Endothelial cell of umbilical vein (primary cell): ENCODE measurements at regions of chr6 and their contacts with region 1.

Region 1: DNA sequence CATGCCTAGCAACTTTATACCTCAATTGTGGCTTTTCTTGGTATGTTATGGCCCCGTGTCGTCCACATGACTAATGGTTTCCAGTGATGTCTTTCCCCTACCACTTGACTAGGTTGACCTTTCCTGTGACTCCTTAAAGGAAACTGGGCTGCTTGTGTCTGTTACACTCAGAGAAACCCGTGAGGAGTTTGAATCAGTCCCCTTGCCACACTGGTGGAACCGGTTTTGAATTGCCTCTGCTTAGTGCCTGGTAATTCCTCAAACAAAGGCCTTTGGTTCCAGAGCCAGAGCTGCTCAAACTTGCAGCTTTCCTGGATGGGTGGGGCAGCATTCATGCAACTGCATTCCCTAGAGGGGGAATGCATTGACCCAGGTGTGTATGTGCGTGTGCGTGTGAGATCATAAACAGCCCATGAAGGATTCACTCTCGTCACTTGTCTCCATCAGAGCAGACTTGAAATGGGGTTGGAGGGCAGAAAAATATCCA is 22.0 kb downstream of the ECT2L start:
- DNase-seq: peak; percentile 56
- H3K4me3 ChIP-seq: no peak overlapping the region
- H3K27ac ChIP-seq: no peak overlapping the region
- H3K4me1 ChIP-seq: peaks cover 23% of the 10 kb centered on the region
- H3K27me3 ChIP-seq: no peaks in the 10 kb centered on the region
- CTCF ChIP-seq: no peak
- POLR2A ChIP-seq: no peak

Region 2: DNA sequence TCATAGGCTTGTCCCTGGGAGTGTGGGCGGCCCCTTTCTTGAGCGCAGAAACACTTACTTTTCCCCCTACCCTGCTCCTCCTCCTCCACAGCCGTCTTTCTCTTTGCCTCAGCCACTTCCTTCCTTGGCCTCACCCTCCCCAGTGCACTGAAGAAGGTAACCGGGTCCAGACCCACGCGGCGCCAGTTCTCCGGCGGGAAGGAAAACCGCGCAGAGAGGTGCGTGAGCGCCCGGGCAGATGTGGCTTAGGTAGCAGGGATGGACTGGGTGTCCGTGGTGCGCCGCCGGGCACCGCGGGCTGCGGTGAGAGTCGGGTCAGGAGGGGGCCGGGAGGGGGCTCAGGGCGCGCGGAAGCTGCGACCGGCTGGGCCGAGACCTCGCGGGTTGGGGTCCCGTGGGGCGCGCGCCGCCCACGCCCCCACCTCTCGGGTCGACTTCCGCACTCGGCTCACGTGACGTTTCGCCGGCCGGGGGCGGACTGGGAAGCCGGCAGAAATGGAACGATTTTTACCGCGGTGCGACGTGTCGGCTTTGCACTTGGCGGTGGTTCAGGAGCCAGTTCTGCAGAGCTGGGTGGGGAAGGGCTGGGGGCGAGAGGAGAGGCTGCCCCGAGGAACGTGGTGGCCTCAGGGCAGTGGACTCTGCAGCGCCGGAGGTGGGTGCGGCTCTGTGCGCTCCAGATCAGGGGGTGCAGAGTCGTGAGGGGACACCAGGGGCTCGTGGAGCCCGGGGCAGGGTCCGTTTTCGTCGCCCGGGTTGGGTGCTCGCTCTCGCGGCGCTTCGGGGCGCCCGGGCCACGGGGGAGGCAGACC is 211.0 kb after region 1 on chr6 and contains the start of gene ABRACL:
- CTCF ChIA-PET with region 1: interaction called, 3 read pairs
- POLR2A ChIA-PET with region 1: no interaction called
- dilution Hi-C with region 1: no loop called
- intact Hi-C with region 1: loop called (anchors 1 kb)
- DNase-seq: peak; percentile 70
- H3K4me3 ChIP-seq: peak within 1 kb of the TSS; percentile 74 to 94 (median 77)
- H3K27ac ChIP-seq: peak within 1 kb of the TSS; percentile 81
- H3K4me1 ChIP-seq: peaks cover 19% of the 10 kb centered on the region
- H3K27me3 ChIP-seq: no peaks in the 10 kb centered on the region
- CTCF ChIP-seq: no peak
- POLR2A ChIP-seq: peak; percentile 16
- total RNA-seq, gene ABRACL: 87.4 and 104 TPM in 2 replicates

Region 3: GRCh38 chr6:139109558-139109957 is 291.7 kb after region 1 on chr6:
- CTCF ChIA-PET with region 1: interaction called, 25 read pairs
- POLR2A ChIA-PET with region 1: no interaction called
- dilution Hi-C with region 1: no loop called
- intact Hi-C with region 1: loop called (anchors 1 kb)
- DNase-seq: peak; percentile 16
- H3K4me3 ChIP-seq: no peak overlapping the region
- H3K27ac ChIP-seq: no peak overlapping the region
- H3K4me1 ChIP-seq: no peaks in the 10 kb centered on the region
- H3K27me3 ChIP-seq: peaks cover 6% of the 10 kb centered on the region in 2 experiments
- CTCF ChIP-seq: peak in 1 of 2 donors; percentile 21
- POLR2A ChIP-seq: no peak

Region 4: DNA sequence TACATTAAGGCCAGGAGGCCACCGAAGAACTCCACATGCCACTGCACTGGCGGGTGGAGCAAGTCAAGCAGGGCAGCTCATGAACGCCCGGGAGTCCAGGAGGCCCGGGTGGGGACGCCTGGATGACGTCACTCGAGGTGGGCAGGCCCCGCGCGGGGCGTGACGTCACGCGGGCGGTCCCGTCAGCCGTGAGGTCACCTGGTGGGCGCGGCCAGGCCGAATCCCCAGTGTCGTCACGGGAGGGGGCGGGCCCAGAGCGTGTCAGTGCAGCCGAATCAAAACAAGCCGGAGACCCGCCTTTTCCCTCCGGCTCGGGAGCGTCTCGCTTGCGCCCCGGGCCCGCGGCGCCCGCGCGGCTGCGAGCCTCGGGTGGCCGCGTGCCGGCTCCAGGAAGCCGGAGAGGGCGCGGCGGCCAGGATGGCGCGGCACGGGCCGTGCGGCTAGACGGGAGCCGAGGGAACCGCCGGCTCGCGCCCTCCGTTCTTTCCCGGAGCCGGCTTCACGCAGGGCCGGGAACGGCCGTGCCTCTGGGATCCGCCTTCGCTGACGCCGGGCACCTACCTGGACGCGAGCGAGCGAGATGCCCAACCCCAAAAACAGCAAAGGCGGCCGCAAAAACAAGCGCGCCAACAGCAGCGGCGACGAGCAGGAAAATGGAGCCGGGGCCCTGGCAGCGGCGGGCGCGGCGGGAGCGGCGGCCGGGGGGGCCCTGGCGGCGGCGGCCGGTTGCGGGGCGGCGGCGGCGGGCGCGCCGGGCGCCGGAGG is 317.1 kb after region 1 on chr6 and contains the start of gene HECA:
- CTCF ChIA-PET with region 1: interaction called, 5 read pairs
- POLR2A ChIA-PET with region 1: no interaction called
- dilution Hi-C with region 1: no loop called
- intact Hi-C with region 1: loop called (anchors 1 kb)
- DNase-seq: peak; percentile 93
- H3K4me3 ChIP-seq: peak within 1 kb of the TSS; percentile 57 to 95 (median 86)
- H3K27ac ChIP-seq: peak within 1 kb of the TSS; percentile 73
- H3K4me1 ChIP-seq: peaks cover 4% of the 10 kb centered on the region
- H3K27me3 ChIP-seq: peaks cover 2% of the 10 kb centered on the region in 2 experiments
- CTCF ChIP-seq: no peak
- POLR2A ChIP-seq: no peak
- total RNA-seq, gene HECA: 16.7 and 18.2 TPM in 2 replicates